A549 (cell line): ENCODE measurements at regions of chr6 and their contacts with region 1.

Region 1: GRCh38 chr6:73566954-73567591 is 46.2 kb upstream of the EEF1A1 start:
- DNase-seq: peak; percentile 74 to 91
- ATAC-seq: peak; percentile 92 to 99
- H3K4me3 ChIP-seq: no peak overlapping the region
- H3K27ac ChIP-seq: peak overlapping the region; percentile 92 to 95
- H3K4me1 ChIP-seq: peaks cover 27% of the 10 kb centered on the region
- CTCF ChIP-seq: no peak
- EP300 ChIP-seq: peak in 1 of 2 experiments; percentile 38; a peak in 1 of 5 replicates
- POLR2A ChIP-seq: no peak
- RAD21 ChIP-seq: no peak

Region 2: GRCh38 chr6:73580247-73581149 is 13.4 kb after region 1 on chr6:
- CTCF ChIA-PET with region 1: interaction called, 10 read pairs
- POLR2A ChIA-PET with region 1: interaction called, 15 read pairs
- DNase-seq: peak; percentile 77 to 96
- ATAC-seq: peak; percentile 95 to 97
- H3K4me3 ChIP-seq: peak overlapping the region; percentile 34
- H3K27ac ChIP-seq: peak overlapping the region; percentile 93 to 98
- H3K4me1 ChIP-seq: peaks cover 42% of the 10 kb centered on the region
- CTCF ChIP-seq: peak; percentile 39
- EP300 ChIP-seq: peak; percentile 58 to 84; a peak in 3 of 5 replicates
- POLR2A ChIP-seq: no peak
- RAD21 ChIP-seq: peak; percentile 46 to 51; a peak in 4 of 5 replicates

Region 3: DNA sequence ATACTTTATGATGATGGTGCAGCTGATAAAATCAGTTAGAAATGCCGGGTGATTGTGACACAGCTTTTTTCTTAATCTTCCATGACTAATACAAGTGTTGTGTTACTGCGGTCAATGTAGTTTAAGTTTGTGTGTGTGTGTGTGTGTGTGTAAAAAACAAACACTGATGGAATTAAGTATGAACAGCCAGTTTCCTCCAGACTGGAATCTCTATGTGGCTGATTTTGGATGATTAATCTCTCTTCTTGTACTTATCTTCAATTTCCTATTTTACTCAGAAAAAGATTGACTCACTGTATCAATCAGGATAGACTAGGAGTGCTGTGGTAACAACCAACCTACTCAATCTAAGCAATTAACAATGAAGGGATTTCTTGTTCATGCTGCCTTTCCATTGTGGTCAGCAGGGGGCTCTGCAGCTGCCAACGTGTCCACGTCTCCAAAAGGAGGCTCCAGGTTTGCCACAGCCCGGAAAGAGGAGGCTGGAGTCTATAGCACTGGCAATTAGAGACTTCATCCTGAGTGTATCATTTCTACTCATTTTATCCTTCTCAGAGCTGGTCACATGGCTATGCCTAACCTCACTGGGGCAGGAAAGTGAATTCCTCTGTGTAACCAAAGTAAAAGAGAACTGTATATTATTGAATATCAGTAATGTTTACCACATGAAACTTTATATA is 236.6 kb after region 1 on chr6:
- CTCF ChIA-PET with region 1: no interaction called
- POLR2A ChIA-PET with region 1: no interaction called
- DNase-seq: peak; percentile 25 to 70
- ATAC-seq: peak; percentile 85
- H3K4me3 ChIP-seq: no peak overlapping the region
- H3K27ac ChIP-seq: peak overlapping the region; percentile 12 to 62; a peak in 5 of 6 replicates
- H3K4me1 ChIP-seq: peaks cover 35% of the 10 kb centered on the region
- CTCF ChIP-seq: peak; percentile 50
- EP300 ChIP-seq: no peak
- POLR2A ChIP-seq: no peak
- RAD21 ChIP-seq: no peak; a peak in 2 of 5 replicates